Dorsolateral prefrontal cortex (tissue), 120 donors: ENCODE measurements at regions of chr3 and their contacts with region 1.

Region 1: GRCh38 chr3:87082796-87083440 is 92.0 kb upstream of the VGLL3 start:
- DNase-seq: no peak
- H3K4me3 ChIP-seq: no peak overlapping the region
- H3K27ac ChIP-seq: no peak overlapping the region
- H3K27me3 ChIP-seq: no peaks in the 10 kb centered on the region
- CTCF ChIP-seq: peak in 54 of 56 donors; percentile 45 to 85 (median 66)

Region 2: GRCh38 chr3:86774082-86774691 is 308.7 kb before region 1 on chr3:
- intact Hi-C with region 1: loop called (anchors 2 kb)
- DNase-seq: no peak
- H3K4me3 ChIP-seq: no peak overlapping the region
- H3K27ac ChIP-seq: no peak overlapping the region
- H3K27me3 ChIP-seq: peaks cover 0 to 9% (median 0%) of the 10 kb centered on the region in 45 donors
- CTCF ChIP-seq: peak; percentile 52 to 91 (median 74)

Region 3: GRCh38 chr3:87145553-87145952 is 62.6 kb after region 1 on chr3:
- intact Hi-C with region 1: loop called in 1 of 2 experiments (anchors 10 kb)
- DNase-seq: peak in 2 of 10 donors; percentile 16 to 27
- H3K4me3 ChIP-seq: no peak overlapping the region
- H3K27ac ChIP-seq: no peak overlapping the region
- H3K27me3 ChIP-seq: no peaks in the 10 kb centered on the region
- CTCF ChIP-seq: peak in 34 of 56 donors; percentile 7 to 41 (median 24)

Region 4: DNA sequence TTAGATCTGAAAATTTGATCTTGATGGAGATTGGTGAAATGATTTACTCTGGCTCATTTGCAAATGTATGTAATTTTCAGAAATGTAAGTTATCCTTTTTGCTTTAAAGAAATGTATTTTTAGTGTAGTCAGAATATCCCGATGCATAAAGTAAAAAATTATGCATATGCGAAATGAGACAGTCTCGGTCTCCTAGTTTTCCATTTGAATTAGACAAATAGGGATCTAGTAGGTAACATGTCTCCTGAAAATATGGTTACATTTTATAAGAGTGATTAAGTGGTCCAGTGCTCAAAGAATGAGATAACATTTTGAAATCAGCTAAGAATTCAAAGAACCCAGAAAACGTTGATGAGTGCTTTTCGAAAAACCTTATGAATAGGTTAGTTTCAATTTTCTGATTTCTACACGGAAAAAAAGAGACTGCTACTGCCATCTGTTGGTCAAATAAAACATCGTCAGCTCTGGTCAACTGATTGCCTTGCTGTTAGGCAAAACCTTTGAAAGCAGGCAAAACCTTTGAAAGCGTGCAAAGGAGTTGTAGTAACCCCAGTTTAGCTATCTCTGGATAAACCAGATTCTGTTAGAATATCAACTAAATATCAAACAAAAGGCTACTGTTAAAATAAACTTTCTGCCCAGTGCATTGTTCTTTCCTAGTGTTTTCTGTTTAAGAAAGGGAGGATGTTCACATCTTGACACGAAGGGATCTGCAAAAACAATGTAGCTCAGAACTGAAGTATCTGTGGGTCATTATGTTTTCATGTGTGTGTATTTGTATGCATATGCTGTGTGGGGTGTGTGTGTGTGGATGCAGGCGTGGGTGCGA is 84.9 kb after region 1 on chr3:
- intact Hi-C with region 1: loop called (anchors 5 to 10 kb)
- DNase-seq: peak in 2 of 10 donors; percentile 7 to 34
- H3K4me3 ChIP-seq: peak overlapping the region; percentile 20 to 72 (median 54)
- H3K27ac ChIP-seq: peak overlapping the region in 5 of 59 donors; percentile 19 to 61 (median 26)
- H3K27me3 ChIP-seq: no peaks in the 10 kb centered on the region
- CTCF ChIP-seq: peak; percentile 57 to 92 (median 80)

Region 5: DNA sequence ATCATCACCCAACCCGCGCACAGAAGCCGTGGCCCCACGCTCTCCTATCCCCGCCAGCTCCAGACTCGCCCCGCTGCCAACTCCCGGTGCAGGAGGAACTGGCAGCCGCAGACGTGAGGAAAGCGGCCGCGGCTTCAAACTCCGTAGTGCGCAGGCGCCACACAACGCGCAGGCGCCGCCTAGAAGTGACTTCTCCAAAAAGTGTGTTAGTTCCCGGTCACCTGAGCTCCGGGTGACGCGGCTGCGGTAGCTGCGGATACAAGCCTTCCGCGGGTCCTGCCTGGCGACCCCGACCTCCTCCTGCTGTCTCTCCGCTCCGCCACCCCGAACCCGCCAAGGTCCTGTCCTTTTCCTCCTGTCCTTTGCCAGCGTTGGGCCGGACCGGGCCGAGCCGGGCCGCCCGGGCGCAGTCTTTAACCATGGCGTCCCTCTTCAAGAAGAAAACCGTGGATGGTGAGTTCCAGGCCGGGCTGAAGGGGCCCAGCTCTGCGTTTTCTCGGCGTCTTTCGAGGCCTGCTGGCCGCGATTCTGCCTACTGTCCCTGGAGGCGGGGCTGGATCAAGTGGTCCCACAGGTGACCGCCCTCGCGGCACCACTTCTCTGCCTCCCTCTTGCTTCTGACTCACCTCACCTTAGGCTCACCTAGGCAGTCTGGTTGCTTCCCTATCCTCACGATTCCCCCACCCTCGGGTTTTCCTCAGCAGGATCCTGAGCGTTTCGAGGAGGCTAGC is 144.4 kb after region 1 on chr3 and contains the start of gene CHMP2B:
- intact Hi-C with region 1: loop called in 1 of 2 experiments (anchors 10 kb)
- DNase-seq: peak; percentile 88 to 95 (median 92)
- H3K4me3 ChIP-seq: peak within 1 kb of the TSS; percentile 56 to 100 (median 95)
- H3K27ac ChIP-seq: peak within 1 kb of the TSS; percentile 56 to 97 (median 89)
- H3K27me3 ChIP-seq: no peaks in the 10 kb centered on the region
- CTCF ChIP-seq: peak in 24 of 56 donors; percentile 1 to 49 (median 22)
- total RNA-seq, gene CHMP2B: 23.8 to 49.2 (median 34.7) TPM